ENCODE measurements at regions of chr5 and their contacts with region 1.

Region 1: GRCh38 chr5:36875790-36876388 is 680 bp upstream of the NIPBL start:
- DNase-seq: peak; percentile 52
- H3K27ac ChIP-seq: peak overlapping the region; percentile 97
- CTCF ChIP-seq: peak; percentile 87

Region 2: DNA sequence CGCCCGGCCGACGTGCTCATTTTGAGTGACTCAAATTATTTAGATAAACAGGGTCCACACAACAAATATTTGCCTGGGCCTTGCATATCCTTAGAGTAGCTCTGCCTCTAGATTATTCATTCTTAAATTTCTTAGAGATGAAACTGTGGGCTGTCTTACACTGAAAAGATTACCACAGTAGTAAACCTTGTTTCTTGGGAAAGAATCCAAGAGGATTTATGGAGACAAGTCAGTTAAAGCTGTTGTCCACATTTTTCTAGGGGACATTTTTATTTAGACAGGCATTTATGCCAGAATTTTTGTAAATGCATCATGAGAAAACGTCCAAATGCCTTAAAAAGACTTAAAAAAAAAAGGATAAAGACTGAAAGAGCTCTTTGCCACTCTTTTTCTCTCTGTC is 541.6 kb before region 1 on chr5:
- CTCF ChIA-PET with region 1: no interaction called
- POLR2A ChIA-PET with region 1: no interaction called
- DNase-seq: no peak
- H3K27ac ChIP-seq: no peak overlapping the region
- CTCF ChIP-seq: no peak

Region 3: GRCh38 chr5:36744773-36745589 is 130.9 kb before region 1 on chr5:
- CTCF ChIA-PET with region 1: interaction called, 10 read pairs
- POLR2A ChIA-PET with region 1: interaction called, 3 read pairs
- DNase-seq: peak; percentile 96
- H3K27ac ChIP-seq: peak overlapping the region; percentile 61
- CTCF ChIP-seq: peak; percentile 92